ENCODE measurements at regions of chr1 and their contacts with region 1.

Region 1: DNA sequence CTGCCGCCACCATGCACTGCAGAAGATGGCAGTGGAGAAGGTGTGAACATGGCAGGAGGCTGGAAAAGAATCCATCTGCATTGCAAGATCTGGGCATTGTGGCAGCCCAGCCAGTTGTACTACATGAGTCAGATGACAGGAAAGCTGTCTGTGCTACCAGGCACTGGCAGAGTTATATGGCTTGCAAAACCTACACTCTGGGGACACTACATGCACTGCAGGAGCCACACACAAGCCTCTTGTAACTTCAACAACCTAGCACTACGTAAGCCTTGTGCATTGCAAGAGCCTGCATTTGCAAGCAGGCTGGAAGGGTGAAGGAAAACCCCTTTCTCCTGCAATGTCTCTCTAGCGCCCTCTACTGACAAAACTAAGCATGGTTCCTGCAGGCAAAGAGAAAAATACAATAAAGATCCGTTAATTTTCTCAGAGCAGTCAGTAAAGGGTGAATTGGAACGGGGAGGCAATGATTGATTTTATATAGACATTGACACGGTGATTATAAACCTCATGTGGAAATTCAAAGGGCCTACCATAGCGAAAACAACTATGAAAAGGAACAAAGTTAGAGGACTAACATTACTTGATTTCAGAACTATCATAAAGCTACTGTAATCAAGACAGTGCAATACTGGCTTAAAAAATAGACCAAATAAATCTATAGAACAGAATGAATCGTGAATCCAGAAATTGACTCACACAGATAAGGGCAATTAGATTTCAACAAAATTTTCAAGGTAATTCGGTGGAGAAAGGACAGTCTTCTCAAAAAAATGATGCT is 26.2 kb upstream of the DYNLT5 start:
- DNase-seq: peak; percentile 35
- CTCF ChIP-seq: peak; percentile 92

Region 2: GRCh38 chr1:66711420-66711819 is 14.7 kb before region 1 on chr1:
- CTCF ChIA-PET with region 1: interaction called, 23 read pairs
- POLR2A ChIA-PET with region 1: no interaction called
- DNase-seq: no peak
- CTCF ChIP-seq: peak; percentile 8

Region 3: DNA sequence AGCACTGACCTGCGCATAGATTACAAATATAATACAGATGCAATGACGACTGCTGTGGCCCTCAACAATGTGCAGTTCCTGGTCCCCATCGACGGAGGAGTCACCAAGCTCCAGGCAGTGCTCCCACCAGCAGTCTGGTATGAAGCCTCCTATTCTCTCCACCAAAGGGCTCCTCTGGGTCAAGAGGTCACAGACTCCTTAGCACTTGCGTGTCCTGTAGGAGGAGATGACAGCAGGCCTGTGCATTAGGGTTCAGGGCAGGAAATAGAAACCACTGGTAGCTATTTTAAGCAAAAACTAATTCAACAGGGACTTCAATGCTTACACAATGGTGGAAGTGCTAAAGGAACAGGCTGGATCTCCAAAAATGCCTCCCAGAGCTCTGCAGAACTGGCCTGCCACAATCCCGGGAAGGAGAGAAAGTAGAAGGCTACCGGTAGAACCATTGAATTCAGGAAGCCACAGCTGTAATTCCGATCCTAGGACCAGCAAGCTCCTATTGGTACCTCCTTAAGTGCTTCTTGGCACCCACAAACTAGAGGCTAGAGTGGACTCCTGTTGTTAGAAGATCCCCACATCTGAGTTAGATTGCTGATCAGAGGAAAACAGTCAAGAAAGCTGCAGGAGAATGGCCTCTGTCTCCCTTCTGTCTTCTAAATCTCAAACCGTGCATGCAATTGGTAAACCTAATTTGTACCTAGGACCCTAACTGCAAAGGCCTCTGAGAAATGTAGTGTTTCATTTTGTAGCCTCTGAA is 13.5 kb after region 1 on chr1:
- CTCF ChIA-PET with region 1: interaction called, 46 read pairs
- POLR2A ChIA-PET with region 1: no interaction called
- DNase-seq: no peak
- CTCF ChIP-seq: no peak

Region 4: GRCh38 chr1:66758241-66758755 is 32.2 kb after region 1 on chr1:
- CTCF ChIA-PET with region 1: interaction called, 11 read pairs
- POLR2A ChIA-PET with region 1: no interaction called
- DNase-seq: peak; percentile 56
- CTCF ChIP-seq: no peak

Region 5: GRCh38 chr1:66824771-66825170 is 98.7 kb after region 1 on chr1:
- CTCF ChIA-PET with region 1: no interaction called
- POLR2A ChIA-PET with region 1: no interaction called
- DNase-seq: no peak
- CTCF ChIP-seq: no peak